MCF 10A (cell line): ENCODE measurements at regions of chr20 and their contacts with region 1.

Region 1: GRCh38 chr20:59087829-59088433 is 45.3 kb upstream of the PRELID3B start:
- DNase-seq: peak; percentile 77
- H3K4me3 Mint-ChIP-seq: no peak overlapping the region
- H3K27ac Mint-ChIP-seq: no peak overlapping the region
- H3K4me1 Mint-ChIP-seq: peaks cover 16% of the 10 kb centered on the region
- H3K27me3 Mint-ChIP-seq: peaks cover 51% of the 10 kb centered on the region
- CTCF ChIP-seq: peak; percentile 81

Region 2: GRCh38 chr20:59055295-59055694 is 32.6 kb before region 1 on chr20:
- CTCF ChIA-PET with region 1: interaction called, 11 read pairs
- POLR2A ChIA-PET with region 1: no interaction called
- intact Hi-C with region 1: no loop called
- DNase-seq: peak; percentile 39
- H3K4me3 Mint-ChIP-seq: no peak overlapping the region
- H3K27ac Mint-ChIP-seq: no peak overlapping the region
- H3K4me1 Mint-ChIP-seq: no peaks in the 10 kb centered on the region
- H3K27me3 Mint-ChIP-seq: peaks cover 32% of the 10 kb centered on the region
- CTCF ChIP-seq: peak; percentile 53

Region 3: GRCh38 chr20:59110607-59111006 is 22.7 kb after region 1 on chr20:
- CTCF ChIA-PET with region 1: interaction called, 10 read pairs
- POLR2A ChIA-PET with region 1: no interaction called
- intact Hi-C with region 1: no loop called
- DNase-seq: no peak
- H3K4me3 Mint-ChIP-seq: no peak overlapping the region
- H3K27ac Mint-ChIP-seq: no peak overlapping the region
- H3K4me1 Mint-ChIP-seq: no peaks in the 10 kb centered on the region
- H3K27me3 Mint-ChIP-seq: peaks cover 74% of the 10 kb centered on the region
- CTCF ChIP-seq: no peak

Region 4: DNA sequence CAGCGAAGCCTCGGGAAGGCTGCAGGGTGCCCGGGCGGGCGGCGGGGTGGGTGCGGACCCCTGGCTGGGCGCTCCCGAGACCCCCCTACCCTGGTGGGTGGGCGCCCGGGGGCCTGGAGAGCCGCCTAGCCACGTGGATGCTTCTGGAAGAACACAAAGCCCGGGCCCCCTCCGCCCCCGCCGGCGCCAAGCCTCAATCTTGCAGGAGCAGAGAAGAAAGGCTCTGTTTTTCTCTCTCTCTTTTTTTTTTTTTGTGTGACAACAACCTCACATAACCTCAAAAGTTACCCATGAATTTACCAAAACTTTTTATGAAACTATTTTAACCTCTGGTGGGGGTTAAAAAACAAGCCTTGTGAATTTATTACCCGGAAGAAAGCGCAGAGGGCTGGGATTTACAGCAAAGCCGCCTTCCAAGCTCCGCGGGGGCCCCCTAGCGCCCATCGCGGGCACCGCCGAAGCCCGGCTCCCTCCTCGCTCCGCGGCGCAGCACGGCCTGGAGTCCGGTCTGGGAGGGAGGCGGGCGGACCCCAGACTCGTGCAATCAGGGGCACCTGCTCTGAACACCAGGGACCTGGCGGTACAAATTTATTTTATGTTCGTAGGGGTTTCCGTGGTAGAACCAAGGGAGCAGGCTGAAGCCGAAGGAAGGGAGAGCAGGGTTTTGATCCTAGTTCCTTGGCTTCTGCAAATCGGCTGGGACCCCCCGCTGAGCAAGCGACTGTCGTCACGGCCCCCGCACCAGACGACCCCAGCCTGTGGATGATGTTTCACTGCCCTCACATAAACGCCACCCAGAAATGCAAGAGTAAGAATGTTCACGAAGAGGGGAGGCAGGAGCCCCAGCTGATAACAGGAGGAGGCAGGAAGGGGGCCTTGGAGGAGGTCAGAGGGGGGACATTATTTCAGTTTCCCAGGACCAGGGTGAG is 134.6 kb after region 1 on chr20:
- CTCF ChIA-PET with region 1: interaction called, 98 read pairs
- POLR2A ChIA-PET with region 1: interaction called, 7 read pairs
- intact Hi-C with region 1: loop called (anchors 1 kb)
- DNase-seq: peak; percentile 55
- H3K4me3 Mint-ChIP-seq: peak overlapping the region; percentile 66
- H3K27ac Mint-ChIP-seq: no peak overlapping the region
- H3K4me1 Mint-ChIP-seq: no peaks in the 10 kb centered on the region
- H3K27me3 Mint-ChIP-seq: peaks cover 96% of the 10 kb centered on the region
- CTCF ChIP-seq: peak; percentile 95

Region 5: GRCh38 chr20:59403261-59403961 is 315.5 kb after region 1 on chr20:
- CTCF ChIA-PET with region 1: interaction called, 10 read pairs
- POLR2A ChIA-PET with region 1: no interaction called
- intact Hi-C with region 1: no loop called
- DNase-seq: peak; percentile 26
- H3K4me3 Mint-ChIP-seq: no peak overlapping the region
- H3K27ac Mint-ChIP-seq: no peak overlapping the region
- H3K4me1 Mint-ChIP-seq: no peaks in the 10 kb centered on the region
- H3K27me3 Mint-ChIP-seq: peaks cover 44% of the 10 kb centered on the region
- CTCF ChIP-seq: peak; percentile 92